H1 (cell line): ENCODE measurements at regions of chr7 and their contacts with region 1.

Region 1: DNA sequence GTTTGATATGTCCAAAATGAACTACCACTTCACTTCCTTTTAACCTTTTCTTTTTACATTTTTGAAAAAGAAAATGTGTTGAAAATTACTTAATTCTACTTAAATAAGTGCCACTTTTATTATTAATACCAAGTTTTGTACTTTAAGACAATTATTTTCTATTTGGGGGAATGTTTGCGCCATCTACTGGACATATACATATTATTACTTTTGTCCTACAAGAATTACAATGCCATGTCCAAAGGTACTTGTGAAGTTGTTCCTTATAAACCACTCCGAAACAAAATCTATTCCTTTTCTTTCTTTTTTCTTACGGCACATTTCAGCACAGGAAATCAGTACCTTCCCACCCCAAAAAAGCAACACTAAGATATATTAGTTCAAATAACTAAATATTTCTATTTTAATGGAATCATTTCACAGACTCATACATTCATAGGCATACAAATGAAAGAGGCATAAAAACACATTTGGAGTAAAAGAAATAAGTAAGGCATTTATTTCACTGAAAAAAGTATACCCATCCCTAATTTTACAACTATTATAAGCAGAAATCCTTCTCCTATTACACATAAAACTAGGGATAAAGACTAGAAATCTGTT is 169.9 kb downstream of the RNF133 start:
- DNase-seq: no peak
- H3K4me3 ChIP-seq: no peak overlapping the region
- H3K27ac ChIP-seq: no peak overlapping the region
- H3K4me1 ChIP-seq: no peaks in the 10 kb centered on the region
- H3K27me3 ChIP-seq: no peaks in the 10 kb centered on the region
- CTCF ChIP-seq: peak in 2 of 3 experiments; percentile 21 to 23; a peak in 2 of 4 replicates
- EP300 ChIP-seq: no peak
- POLR2A ChIP-seq: no peak
- RAD21 ChIP-seq: peak; percentile 52 to 71

Region 2: GRCh38 chr7:122219253-122219865 is 309.6 kb before region 1 on chr7:
- CTCF ChIA-PET with region 1: interaction called, 88 read pairs
- POLR2A ChIA-PET with region 1: interaction called, 3 read pairs
- DNase-seq: no peak
- H3K4me3 ChIP-seq: no peak overlapping the region
- H3K27ac ChIP-seq: no peak overlapping the region
- H3K4me1 ChIP-seq: no peaks in the 10 kb centered on the region
- H3K27me3 ChIP-seq: no peaks in the 10 kb centered on the region
- CTCF ChIP-seq: peak in 2 of 3 experiments; percentile 45 to 57; a peak in 2 of 4 replicates
- EP300 ChIP-seq: no peak
- POLR2A ChIP-seq: no peak
- RAD21 ChIP-seq: peak; percentile 78 to 92

Region 3: GRCh38 chr7:122300211-122300932 is 228.6 kb before region 1 on chr7:
- CTCF ChIA-PET with region 1: interaction called, 15 read pairs
- POLR2A ChIA-PET with region 1: no interaction called
- DNase-seq: peak in 1 of 2 experiments; percentile 74
- H3K4me3 ChIP-seq: peak overlapping the region; percentile 66 to 82 (median 76)
- H3K27ac ChIP-seq: no peak overlapping the region
- H3K4me1 ChIP-seq: peaks cover 5 to 28% (median 12%) of the 10 kb centered on the region in 4 experiments
- H3K27me3 ChIP-seq: peaks cover 41 to 68% (median 62%) of the 10 kb centered on the region in 4 experiments
- CTCF ChIP-seq: no peak
- EP300 ChIP-seq: no peak
- POLR2A ChIP-seq: no peak
- RAD21 ChIP-seq: no peak; a peak in 1 of 4 replicates

Region 4: GRCh38 chr7:122556873-122557542 is 28.0 kb after region 1 on chr7:
- CTCF ChIA-PET with region 1: no interaction called
- POLR2A ChIA-PET with region 1: no interaction called
- DNase-seq: no peak
- H3K4me3 ChIP-seq: no peak overlapping the region
- H3K27ac ChIP-seq: no peak overlapping the region
- H3K4me1 ChIP-seq: no peaks in the 10 kb centered on the region
- H3K27me3 ChIP-seq: no peaks in the 10 kb centered on the region
- CTCF ChIP-seq: no peak
- EP300 ChIP-seq: no peak
- POLR2A ChIP-seq: no peak
- RAD21 ChIP-seq: no peak